Dorsolateral prefrontal cortex (tissue), 120 donors: ENCODE measurements at regions of chr22 and their contacts with region 1.

Region 1: DNA sequence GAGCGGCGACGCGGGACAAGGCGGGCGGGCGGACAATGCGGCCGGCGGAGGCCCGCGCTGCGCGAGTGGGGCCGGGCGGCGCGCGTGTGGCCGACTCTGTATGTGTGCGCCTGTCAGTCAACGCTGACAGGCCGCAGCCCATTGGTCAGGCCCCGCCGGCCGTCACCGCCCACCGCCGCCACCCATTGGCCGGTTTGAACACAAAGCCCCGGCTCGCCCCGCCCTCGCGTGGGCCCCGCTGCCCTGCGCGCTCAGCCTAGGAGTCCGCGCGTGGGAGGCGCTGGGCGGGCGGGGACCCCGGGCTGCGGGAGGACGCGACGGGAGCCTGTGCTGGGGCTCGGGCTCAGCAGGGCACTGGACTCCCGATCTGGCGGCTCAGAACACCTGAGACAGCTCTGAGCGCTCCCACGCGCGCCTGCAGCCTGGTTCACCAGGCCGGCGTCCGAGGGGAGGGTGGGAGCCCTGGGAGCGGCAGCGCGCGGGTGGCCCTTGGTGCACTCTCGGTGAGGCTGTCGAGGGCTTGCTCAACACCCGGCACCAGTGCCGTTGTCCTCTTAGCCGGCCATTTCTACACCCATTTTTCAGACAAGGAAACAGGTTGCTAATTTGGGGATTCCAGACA is at the start of gene SUN2:
- DNase-seq: peak; percentile 97 to 99 (median 98)
- H3K4me3 ChIP-seq: peak within 1 kb of the TSS; percentile 66 to 96 (median 78)
- H3K27ac ChIP-seq: peak within 1 kb of the TSS; percentile 89 to 99 (median 97)
- H3K27me3 ChIP-seq: no peaks in the 10 kb centered on the region
- CTCF ChIP-seq: peak in 6 of 56 donors; percentile 3 to 24 (median 12)
- total RNA-seq, gene SUN2: 122 to 627 (median 268) TPM

Region 2: GRCh38 chr22:38705235-38706100 is 50.6 kb before region 1 on chr22 and contains the start of gene GTPBP1:
- intact Hi-C with region 1: loop called (anchors 2 kb)
- DNase-seq: peak; percentile 94 to 100 (median 99)
- H3K4me3 ChIP-seq: peak within 1 kb of the TSS; percentile 71 to 100 (median 94)
- H3K27ac ChIP-seq: peak within 1 kb of the TSS; percentile 84 to 99 (median 95)
- H3K27me3 ChIP-seq: no peaks in the 10 kb centered on the region
- CTCF ChIP-seq: peak in 21 of 56 donors; percentile 10 to 53 (median 18)
- total RNA-seq, gene GTPBP1: 30.5 to 76.8 (median 48.2) TPM

Region 3: DNA sequence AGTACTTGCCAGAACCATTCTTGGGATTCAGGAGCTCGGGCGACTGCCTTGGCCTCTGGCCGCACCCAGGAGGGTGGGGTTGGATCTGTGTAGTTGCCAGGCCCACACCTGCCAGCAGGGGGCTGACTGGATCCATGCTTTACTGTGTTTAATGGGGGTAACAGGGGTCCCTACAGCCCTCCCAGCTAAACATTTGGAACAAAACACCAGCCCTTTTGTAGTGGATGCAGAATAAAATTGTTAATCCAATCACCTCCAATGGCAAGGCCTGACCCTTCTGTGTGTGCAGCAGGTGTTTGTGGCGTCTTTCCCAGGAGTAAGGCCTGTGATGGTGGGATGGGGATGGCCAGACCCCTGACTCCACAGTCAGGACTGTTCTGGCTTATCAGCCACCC is 22.7 kb before region 1 on chr22:
- intact Hi-C with region 1: loop called in 1 of 2 experiments (anchors 2 kb)
- DNase-seq: peak in 5 of 10 donors; percentile 60 to 73 (median 71)
- H3K4me3 ChIP-seq: peak overlapping the region in 1 of 59 donors; percentile 14
- H3K27ac ChIP-seq: peak overlapping the region; percentile 89 to 100 (median 98)
- H3K27me3 ChIP-seq: no peaks in the 10 kb centered on the region
- CTCF ChIP-seq: peak; percentile 41 to 79 (median 65)